Ascending aorta (tissue), 2 donors: ENCODE measurements at regions of chr12 and their contacts with region 1.

Region 1: GRCh38 chr12:2783936-2784600 is 10.7 kb upstream of the FKBP4 start:
- DNase-seq: peak in 1 of 2 donors; percentile 78
- H3K4me3 ChIP-seq: peak overlapping the region; percentile 41 to 56
- H3K27ac ChIP-seq: no peak overlapping the region
- H3K4me1 ChIP-seq: no peaks in the 10 kb centered on the region
- H3K27me3 ChIP-seq: no peaks in the 10 kb centered on the region
- CTCF ChIP-seq: peak; percentile 81 to 94 (median 91)

Region 2: DNA sequence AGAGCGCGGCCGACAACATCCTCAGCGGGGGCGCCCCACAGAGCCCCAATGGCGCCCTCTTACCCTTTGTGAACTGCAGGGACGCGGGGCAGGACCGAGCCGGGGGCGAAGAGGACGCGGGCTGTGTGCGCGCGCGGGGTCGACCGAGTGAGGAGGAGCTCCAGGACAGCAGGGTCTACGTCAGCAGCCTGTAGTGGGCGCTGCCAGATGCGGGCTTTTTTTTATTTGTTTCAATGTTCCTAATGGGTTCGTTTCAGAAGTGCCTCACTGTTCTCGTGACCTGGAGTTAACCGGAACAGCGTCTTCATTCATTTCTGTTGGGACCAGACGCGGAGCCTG is 93.1 kb before region 1 on chr12:
- intact Hi-C with region 1: loop called (anchors 5 kb)
- DNase-seq: peak in 1 of 2 donors; percentile 62
- H3K4me3 ChIP-seq: peak overlapping the region in 1 of 2 donors; percentile 36
- H3K27ac ChIP-seq: no peak overlapping the region
- H3K4me1 ChIP-seq: no peaks in the 10 kb centered on the region
- H3K27me3 ChIP-seq: no peaks in the 10 kb centered on the region
- CTCF ChIP-seq: no peak

Region 3: DNA sequence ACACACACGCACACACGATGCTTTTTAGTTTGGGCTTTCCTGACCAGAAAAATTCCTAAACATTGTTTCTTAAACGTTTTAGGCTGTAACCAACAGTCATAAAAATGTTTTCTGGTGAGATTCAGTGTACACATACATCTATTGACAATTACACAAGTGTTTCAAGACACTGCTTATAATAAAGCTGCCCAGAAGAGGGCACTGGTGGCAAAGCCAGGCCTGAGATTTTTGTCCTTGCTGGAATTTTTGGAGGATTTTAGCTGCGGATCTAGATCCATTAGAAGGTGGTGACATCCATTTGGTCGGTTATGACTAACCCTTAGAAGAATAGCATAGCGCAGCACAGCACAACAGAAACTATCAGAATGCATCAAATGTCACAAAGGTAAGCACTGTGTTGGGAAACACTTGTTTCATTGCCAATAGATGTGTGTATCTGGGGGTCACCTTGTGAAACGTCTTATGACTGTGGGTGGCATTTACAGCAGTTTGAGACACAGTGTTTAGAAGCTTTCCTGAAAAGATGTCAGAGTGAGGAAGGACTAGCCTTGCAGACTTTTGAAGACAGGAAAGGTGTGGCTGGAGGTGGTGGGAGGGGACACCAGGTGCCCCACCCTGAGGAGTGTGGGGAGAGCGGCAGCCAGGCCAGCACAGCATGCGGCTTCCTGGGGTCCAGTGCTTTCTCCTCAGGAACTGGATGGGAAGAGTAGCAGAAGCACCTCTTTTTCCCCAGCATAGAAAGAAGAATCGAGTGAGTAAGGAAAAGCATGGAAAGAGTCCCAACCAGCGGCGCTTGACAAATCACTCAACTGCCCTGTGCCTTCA is 44.0 kb before region 1 on chr12:
- intact Hi-C with region 1: loop called (anchors 1 kb)
- DNase-seq: no peak
- H3K4me3 ChIP-seq: no peak overlapping the region
- H3K27ac ChIP-seq: no peak overlapping the region
- H3K4me1 ChIP-seq: no peaks in the 10 kb centered on the region
- H3K27me3 ChIP-seq: no peaks in the 10 kb centered on the region
- CTCF ChIP-seq: peak in 2 of 3 experiments; percentile 46 to 68